Activated CD4-positive, alpha-beta T cell treated with anti-CD3 and anti-CD28 coated beads for 36 hours (primary cell): ENCODE measurements at regions of chr5 and their contacts with region 1.

Region 1: DNA sequence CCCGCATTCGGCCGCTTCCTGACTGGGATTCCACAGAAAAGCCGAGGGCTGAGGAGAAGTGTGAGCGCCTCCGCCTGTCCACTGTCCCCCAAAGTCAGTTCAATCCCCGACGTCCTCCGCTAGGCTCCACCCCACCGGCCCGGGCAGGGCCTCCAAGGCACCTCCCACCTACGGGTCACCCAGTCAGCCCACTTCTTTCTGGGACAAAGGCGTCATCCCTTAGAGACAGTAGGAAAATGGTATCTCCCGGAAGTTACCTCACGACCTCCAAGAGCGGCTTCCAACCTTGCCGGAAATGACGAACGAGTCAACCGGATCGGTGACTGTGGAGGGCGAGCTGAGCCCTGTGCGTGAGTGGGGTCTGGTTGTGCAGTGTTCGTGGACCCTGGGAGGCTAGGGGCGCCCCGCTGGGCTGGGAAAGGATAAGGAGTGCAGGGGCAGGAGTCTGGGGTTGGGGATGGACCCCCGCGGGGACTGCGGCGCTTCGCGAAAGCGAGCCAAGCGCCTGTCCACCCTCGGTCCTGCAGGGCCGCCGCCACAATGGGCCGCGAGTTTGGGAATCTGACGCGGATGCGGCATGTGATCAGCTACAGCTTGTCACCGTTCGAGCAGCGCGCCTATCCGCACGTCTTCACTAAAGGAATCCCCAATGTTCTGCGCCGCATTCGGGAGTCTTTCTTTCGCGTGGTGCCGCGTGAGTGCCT is at the starts of genes GDF9 and UQCRQ:
- DNase-seq: peak; percentile 94
- ATAC-seq: peak; percentile 99
- H3K4me3 Mint-ChIP-seq: peak within 1 kb of the TSS; percentile 99
- H3K27ac Mint-ChIP-seq: peak within 1 kb of the TSS; percentile 100
- H3K4me1 Mint-ChIP-seq: peaks cover 26% of the 10 kb centered on the region
- H3K27me3 Mint-ChIP-seq: no peaks in the 10 kb centered on the region
- total RNA-seq, gene GDF9: 0.41 to 0.69 TPM
- total RNA-seq, gene UQCRQ: 299 to 537 TPM

Region 2: GRCh38 chr5:132293066-132293991 is 573.2 kb before region 1 on chr5:
- CTCF ChIA-PET with region 1: no interaction called
- POLR2A ChIA-PET with region 1: no interaction called
- intact Hi-C with region 1: loop called in 1 of 2 experiments (anchors 5 kb)
- DNase-seq: peak; percentile 89
- ATAC-seq: peak; percentile 45
- H3K4me3 Mint-ChIP-seq: peak overlapping the region; percentile 88
- H3K27ac Mint-ChIP-seq: peak overlapping the region; percentile 94
- H3K4me1 Mint-ChIP-seq: peaks cover 22% of the 10 kb centered on the region
- H3K27me3 Mint-ChIP-seq: peaks cover 10% of the 10 kb centered on the region

Region 3: GRCh38 chr5:132546108-132546507 is 320.4 kb before region 1 on chr5:
- CTCF ChIA-PET with region 1: no interaction called
- POLR2A ChIA-PET with region 1: no interaction called
- intact Hi-C with region 1: no loop called
- DNase-seq: peak; percentile 85
- ATAC-seq: peak; percentile 96
- H3K4me3 Mint-ChIP-seq: no peak overlapping the region
- H3K27ac Mint-ChIP-seq: no peak overlapping the region
- H3K4me1 Mint-ChIP-seq: peaks cover 18% of the 10 kb centered on the region
- H3K27me3 Mint-ChIP-seq: no peaks in the 10 kb centered on the region

Region 4: DNA sequence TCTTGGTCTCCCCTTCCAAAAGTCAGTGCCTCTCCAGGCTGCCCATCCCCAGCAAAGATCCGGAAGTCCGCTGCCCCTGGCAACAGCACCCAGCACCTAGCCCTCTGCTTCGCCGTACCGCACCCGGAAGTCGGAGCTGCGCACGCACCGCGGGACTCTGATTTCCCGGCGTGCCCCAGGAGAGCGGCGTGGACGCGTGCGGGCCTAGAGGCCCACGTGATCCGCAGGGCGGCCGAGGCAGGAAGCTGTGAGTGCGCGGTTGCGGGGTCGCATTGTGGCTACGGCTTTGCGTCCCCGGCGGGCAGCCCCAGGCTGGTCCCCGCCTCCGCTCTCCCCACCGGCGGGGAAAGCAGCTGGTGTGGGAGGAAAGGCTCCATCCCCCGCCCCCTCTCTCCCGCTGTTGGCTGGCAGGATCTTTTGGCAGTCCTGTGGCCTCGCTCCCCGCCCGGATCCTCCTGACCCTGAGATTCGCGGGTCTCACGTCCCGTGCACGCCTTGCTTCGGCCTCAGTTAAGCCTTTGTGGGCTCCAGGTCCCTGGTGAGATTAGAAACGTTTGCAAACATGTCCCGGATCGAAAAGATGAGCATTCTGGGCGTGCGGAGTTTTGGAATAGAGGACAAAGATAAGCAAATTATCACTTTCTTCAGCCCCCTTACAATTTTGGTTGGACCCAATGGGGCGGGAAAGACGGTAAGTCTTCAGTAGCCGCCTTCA is 309.6 kb before region 1 on chr5 and contains the start of gene RAD50:
- CTCF ChIA-PET with region 1: no interaction called
- POLR2A ChIA-PET with region 1: interaction called, 4 read pairs
- intact Hi-C with region 1: loop called in 1 of 2 experiments (anchors 1 kb)
- DNase-seq: peak; percentile 96
- ATAC-seq: peak; percentile 99
- H3K4me3 Mint-ChIP-seq: peak within 1 kb of the TSS; percentile 96
- H3K27ac Mint-ChIP-seq: peak within 1 kb of the TSS; percentile 98
- H3K4me1 Mint-ChIP-seq: peaks cover 21% of the 10 kb centered on the region
- H3K27me3 Mint-ChIP-seq: no peaks in the 10 kb centered on the region
- total RNA-seq, gene RAD50: 46.0 to 51.3 TPM

Region 5: DNA sequence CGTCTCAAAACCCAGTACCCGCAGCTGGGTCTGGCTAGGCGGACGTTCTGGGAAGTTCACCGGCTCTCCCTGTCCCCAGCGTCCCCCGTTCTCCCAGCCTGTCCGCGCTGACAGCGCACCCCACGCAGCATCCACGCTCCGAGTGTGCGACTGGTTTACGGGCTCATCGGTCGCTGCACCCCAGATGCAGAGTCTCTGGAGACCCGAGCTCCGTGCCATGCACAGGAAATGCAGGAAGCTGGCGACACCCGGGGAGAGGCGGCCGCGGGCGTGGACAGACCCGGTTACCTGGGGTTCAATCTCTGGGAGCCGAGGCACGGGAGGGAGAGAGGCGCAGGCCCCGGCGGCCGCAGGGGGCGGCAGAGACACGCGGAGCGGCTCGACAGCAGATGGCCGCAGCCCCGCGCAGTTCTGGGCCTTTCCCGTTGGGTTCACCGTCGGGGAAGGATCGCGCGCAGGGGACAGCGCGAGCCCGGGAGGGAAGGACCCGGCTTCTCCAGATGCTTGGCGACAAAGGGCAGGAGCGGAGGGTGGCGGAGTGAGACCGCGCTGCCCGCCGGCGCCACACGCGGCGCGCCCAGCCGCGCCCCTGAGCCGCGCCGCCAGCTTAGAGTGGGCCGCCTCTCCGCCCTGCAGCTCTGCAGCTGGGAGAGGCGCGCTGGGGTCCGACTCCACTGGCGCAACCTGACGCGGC is 36.6 kb before region 1 on chr5:
- CTCF ChIA-PET with region 1: interaction called, 10 read pairs
- POLR2A ChIA-PET with region 1: no interaction called
- intact Hi-C with region 1: loop called (anchors 1 kb)
- DNase-seq: peak; percentile 86
- ATAC-seq: peak; percentile 87
- H3K4me3 Mint-ChIP-seq: peak overlapping the region; percentile 70
- H3K27ac Mint-ChIP-seq: no peak overlapping the region
- H3K4me1 Mint-ChIP-seq: peaks cover 2% of the 10 kb centered on the region
- H3K27me3 Mint-ChIP-seq: peaks cover 38% of the 10 kb centered on the region

Region 6: DNA sequence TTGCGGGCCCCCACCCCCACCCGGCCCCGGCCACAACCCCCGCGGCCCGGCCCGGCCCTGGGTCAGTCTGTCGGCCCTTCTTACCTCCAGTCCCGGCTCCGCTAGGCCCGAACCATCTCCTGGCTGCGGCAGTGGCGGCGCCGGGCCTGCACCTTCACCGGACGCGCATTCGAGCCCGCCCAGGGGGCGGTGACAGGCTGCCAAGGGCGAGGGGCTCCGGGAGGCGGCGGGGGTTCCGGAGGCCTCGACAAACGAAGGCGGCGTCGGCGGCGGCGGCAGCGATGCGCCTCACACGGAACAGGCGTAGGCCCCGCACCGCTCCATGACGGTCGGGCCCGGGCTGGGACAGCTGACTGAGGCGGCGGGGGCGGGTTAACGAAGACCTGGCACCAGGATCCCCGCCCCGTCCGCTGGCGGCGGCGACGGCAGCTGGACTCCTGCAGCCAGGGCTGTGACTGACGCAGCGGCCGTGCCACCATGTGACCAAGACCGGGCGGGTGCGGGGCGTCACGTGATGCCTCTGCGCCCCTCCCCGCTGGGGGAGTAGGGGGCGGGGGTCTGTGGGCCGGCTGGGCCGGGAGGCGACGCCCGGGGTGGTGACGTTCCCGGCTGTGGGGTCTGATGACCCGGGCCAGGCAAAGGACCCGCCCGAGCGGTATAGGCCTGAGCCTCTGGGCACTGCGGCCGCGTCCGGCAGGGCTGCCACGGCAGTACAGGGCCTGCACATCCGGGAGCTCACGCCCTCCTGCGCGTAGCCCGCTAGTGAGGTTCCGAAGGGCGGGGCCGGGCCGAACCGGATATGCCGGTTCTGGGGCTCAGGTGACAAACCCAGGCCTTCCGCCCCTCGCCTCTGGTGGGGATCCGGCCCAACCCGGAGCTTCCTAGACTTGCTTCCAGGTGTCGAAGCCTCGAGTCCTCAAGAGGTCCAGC is 96.9 kb after region 1 on chr5 and contains the start of gene AFF4:
- CTCF ChIA-PET with region 1: no interaction called
- POLR2A ChIA-PET with region 1: no interaction called
- intact Hi-C with region 1: loop called (anchors 1 kb)
- DNase-seq: peak; percentile 94
- ATAC-seq: peak; percentile 92
- H3K4me3 Mint-ChIP-seq: peak within 1 kb of the TSS; percentile 96
- H3K27ac Mint-ChIP-seq: peak within 1 kb of the TSS; percentile 99
- H3K4me1 Mint-ChIP-seq: peaks cover 32% of the 10 kb centered on the region
- H3K27me3 Mint-ChIP-seq: no peaks in the 10 kb centered on the region
- total RNA-seq, gene AFF4: 20.9 to 29.3 TPM

Region 7: DNA sequence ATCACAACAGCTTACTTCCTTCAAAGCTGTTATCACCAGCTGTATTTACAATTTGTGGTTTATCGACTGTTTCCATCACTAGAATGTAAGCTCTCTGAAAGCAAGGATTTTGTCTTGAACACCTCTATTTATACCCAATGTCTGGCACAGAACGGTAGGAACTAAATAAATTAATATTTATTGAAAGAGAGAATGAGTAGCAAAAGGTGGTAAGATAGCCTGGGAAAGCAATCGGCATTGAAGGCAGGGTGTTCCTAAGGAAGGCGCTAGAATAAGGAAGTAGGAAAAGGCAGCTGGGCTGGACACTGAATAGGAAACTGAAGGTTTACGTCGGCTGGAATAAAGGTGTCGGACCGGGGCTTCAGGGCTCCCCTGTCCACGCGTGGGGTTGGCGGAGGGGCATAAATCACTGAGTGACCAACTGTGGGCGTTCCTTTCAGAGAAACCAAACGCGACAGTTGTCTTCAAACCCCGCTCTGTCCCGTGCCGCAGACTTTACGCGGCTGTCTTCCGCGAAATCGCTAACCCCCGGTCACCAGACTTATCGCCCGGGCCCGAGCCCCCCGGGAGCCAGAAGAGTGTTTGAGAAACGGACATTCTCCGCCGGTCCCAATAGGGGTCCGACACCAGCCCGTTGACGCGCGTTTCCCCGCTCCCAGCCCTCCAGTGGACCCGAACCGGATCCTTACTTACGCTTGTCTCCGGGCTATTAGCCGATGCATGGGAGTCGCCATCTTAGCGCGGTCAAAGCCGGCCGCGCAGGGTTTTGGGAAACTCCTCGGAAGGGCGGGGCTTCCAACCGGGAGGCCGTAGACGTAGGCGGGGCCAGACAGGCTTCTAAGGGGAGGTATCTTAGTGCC is 159.5 kb after region 1 on chr5 and contains the start of gene ZCCHC10:
- CTCF ChIA-PET with region 1: no interaction called
- POLR2A ChIA-PET with region 1: no interaction called
- intact Hi-C with region 1: loop called in 1 of 2 experiments (anchors 1 kb)
- DNase-seq: peak; percentile 96
- ATAC-seq: peak; percentile 100
- H3K4me3 Mint-ChIP-seq: peak within 1 kb of the TSS; percentile 94
- H3K27ac Mint-ChIP-seq: peak within 1 kb of the TSS; percentile 91
- H3K4me1 Mint-ChIP-seq: peaks cover 17% of the 10 kb centered on the region
- H3K27me3 Mint-ChIP-seq: no peaks in the 10 kb centered on the region
- total RNA-seq, gene ZCCHC10: 25.7 to 32.2 TPM

Region 8: DNA sequence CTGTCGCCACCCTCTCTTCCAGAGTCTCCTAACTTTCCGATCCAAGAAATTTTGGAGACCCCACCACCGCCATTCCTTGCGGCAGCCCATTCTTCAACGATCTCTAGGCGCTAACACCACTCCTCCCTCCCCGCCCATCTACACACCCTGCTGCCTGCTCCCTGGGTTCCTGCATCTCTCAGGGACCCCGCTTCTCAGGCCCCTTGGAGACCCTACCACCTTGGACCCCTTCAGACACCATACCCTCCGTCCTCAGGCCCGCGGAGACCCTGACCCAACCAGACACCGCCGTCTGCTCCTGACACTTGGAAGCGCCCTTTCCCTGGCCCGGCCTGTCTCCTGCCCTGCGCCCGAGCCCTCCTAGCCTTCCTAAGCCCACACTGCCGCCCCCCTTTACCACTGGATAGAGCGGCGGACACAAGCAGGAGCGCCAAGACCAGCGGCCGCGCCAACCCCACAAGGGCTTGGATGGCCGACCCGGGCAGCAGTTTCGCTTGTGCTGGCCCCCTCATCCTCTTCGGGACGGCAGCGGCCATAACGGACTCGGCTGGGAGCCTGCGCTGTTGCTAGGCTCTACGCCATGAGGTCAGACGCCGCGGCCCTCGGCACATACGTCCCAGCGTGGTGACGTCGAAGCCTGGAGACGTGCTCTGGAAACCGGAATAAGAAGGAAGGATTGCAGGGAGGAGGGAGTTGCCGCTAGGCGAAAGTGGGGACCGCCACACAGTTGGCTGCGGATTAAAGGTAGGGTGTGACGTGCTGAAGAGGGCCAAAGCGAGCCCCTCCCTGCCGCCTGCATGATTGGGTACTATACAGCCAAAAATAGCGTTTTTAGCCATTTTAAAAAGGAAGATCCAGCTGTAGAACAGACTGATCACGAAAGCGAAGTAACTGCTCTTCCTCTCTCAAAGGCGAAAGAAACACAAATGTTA is 1101.8 kb after region 1 on chr5 and contains the start of gene C5orf15:
- CTCF ChIA-PET with region 1: no interaction called
- POLR2A ChIA-PET with region 1: no interaction called
- intact Hi-C with region 1: loop called in 1 of 2 experiments (anchors 1 kb)
- DNase-seq: peak; percentile 97
- ATAC-seq: peak; percentile 97
- H3K4me3 Mint-ChIP-seq: peak within 1 kb of the TSS; percentile 94
- H3K27ac Mint-ChIP-seq: peak within 1 kb of the TSS; percentile 90
- H3K4me1 Mint-ChIP-seq: peaks cover 51% of the 10 kb centered on the region
- H3K27me3 Mint-ChIP-seq: no peaks in the 10 kb centered on the region
- total RNA-seq, gene C5orf15: 28.7 to 38.7 TPM